ENCODE measurements at regions of chr15 and their contacts with region 1.

Region 1: DNA sequence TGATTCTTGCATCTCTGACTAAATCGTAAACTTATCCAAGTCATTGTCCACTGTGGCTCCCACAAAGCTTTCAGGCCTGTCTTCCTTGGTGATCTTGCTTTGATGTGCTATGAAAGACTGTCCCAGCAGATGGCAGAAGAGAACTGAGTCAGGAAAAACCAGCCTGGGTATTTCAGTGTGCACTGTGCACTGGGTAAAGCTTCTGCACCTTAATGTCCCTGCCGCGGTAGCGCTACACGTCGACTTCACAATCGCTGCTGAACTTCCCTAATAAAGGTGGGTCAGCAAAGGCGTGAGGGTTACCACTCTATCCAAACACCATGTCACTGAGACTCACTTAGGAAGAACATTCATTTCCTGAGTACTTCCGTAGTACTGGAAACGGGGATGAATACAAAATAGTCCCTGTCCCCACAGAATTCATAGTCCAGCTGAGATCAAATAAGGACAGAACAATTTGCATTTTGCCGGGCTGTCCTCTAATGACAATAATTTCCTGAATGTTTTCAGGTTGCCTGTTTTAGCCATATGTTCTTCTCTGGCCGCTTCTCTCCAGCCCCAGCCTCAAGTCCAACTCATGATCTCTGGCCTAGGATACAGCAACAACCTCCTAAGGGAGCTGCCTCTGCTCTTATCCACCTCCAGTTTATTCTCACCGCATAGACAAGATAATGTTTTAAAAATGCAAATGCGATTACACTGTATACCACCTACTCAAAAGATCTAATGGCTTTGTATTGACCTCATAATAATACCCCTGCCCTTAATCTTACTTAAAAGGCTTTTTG is 83.6 kb upstream of the AKAP13 start:
- DNase-seq: peak; percentile 78
- H3K4me3 ChIP-seq: peak overlapping the region in 1 of 4 donors; percentile 28
- H3K27ac ChIP-seq: peak overlapping the region in 1 of 4 donors; percentile 22
- H3K4me1 ChIP-seq: peaks cover 0 to 8% (median 0%) of the 10 kb centered on the region in 4 donors
- H3K27me3 ChIP-seq: no peaks in the 10 kb centered on the region
- CTCF ChIP-seq: peak; percentile 66 to 81 (median 69)
- EP300 ChIP-seq: no peak
- POLR2A ChIP-seq: no peak

Region 2: DNA sequence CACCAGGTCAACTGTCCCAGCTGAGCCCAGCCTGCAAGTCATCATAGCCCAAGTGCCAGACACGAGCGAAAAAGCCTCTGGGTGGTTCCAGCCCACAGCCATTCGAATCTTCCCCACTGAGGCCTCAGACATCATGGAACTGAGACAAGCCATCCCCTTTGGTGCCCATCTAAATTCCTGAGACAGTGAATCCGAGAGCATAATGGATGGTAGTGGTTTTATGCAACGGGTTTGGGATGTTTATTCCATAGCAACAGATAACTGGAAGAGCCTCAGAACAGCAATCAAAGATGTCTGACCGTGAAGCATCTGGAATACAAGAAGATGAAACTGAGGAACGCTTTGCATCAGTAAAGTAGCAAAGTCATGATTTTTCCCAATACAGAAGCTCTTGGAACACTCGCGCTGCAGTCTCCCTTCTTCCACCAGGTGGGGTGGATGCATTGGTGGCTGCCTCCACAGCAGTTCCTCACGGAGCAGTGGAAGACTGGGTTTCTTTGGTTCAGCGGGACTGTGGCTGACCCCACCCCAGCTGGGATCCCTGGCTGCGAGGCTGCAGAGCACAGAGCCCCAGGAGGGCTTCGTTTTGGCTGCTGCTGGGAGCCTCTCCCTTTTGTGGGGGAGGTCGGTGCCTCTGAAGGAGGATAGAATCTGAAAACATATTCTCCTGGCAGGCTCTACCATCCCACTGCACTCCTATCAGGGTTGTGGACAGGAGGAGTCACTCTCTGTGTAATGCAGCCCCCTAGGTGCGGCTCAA is 341.5 kb before region 1 on chr15:
- in situ Hi-C with region 1: loop called in 1 of 4 experiments (anchors 25 kb)
- intact Hi-C with region 1: no loop called
- DNase-seq: peak; percentile 78
- H3K4me3 ChIP-seq: peak overlapping the region in 2 of 4 donors; percentile 5 to 33
- H3K27ac ChIP-seq: no peak overlapping the region
- H3K4me1 ChIP-seq: peaks cover 0 to 7% (median 3%) of the 10 kb centered on the region in 4 donors
- H3K27me3 ChIP-seq: no peaks in the 10 kb centered on the region
- CTCF ChIP-seq: peak; percentile 84 to 93 (median 86)
- EP300 ChIP-seq: no peak
- POLR2A ChIP-seq: no peak

Region 3: DNA sequence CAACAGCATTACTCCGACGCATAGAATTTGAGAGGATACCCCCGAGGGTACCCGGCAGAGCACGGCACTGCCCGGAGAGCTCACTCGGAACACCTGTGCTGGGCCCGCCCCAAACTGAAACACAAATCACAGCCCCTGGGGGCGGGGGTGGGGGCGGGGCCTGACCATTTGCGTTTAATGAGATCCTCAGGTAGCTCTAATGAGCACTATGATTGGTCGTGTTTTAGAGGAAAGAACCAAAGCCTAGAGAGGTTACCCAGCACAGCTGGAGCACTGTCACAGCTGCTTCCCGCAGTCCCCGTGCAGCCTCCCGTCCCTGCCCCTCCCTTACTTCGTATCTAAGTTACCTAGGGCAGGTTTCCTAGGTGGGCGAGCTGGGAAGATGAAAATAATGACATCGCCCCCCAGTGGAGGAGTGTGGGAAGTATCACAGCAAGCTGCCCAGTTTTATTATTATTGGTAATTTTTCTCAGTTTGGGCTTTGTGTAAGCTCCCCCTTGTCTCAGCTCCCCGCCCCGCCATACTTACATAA is 128.1 kb before region 1 on chr15:
- in situ Hi-C with region 1: loop called in 3 of 4 experiments (anchors 25 kb)
- intact Hi-C with region 1: no loop called
- DNase-seq: peak; percentile 57
- H3K4me3 ChIP-seq: peak overlapping the region in 1 of 4 donors; percentile 32
- H3K27ac ChIP-seq: no peak overlapping the region
- H3K4me1 ChIP-seq: peaks cover 0 to 9% (median 2%) of the 10 kb centered on the region in 4 donors
- H3K27me3 ChIP-seq: peaks cover 29% of the 10 kb centered on the region
- CTCF ChIP-seq: peak in 4 of 5 experiments; percentile 34 to 46 (median 39)
- EP300 ChIP-seq: no peak
- POLR2A ChIP-seq: no peak

Region 4: DNA sequence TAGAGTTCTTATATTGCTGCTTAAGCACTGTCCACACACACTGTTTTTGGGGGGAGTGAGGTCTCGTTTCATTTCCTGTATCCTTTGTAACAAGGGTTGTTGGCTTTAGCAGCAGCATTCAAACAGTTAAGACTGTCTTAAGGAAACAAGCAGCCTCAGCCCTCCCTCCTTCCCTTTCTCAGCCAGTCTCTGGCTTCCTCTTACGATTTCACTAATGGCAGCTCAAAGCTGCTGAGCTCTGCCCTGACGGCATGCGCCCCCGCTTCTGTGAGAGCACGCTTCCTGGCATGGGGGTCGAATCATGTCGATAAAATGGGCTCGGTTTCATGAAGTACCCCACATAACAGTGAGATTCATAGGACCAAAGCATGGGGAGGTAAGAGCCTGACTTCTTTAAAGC is 392.9 kb after region 1 on chr15:
- in situ Hi-C with region 1: no loop called
- intact Hi-C with region 1: no loop called
- DNase-seq: peak; percentile 56
- H3K4me3 ChIP-seq: peak overlapping the region in 3 of 4 donors; percentile 7 to 45 (median 26)
- H3K27ac ChIP-seq: peak overlapping the region; percentile 56 to 79 (median 68)
- H3K4me1 ChIP-seq: peaks cover 6 to 31% (median 9%) of the 10 kb centered on the region in 4 donors
- H3K27me3 ChIP-seq: no peaks in the 10 kb centered on the region
- CTCF ChIP-seq: no peak
- EP300 ChIP-seq: no peak
- POLR2A ChIP-seq: peak; percentile 68

Region 5: DNA sequence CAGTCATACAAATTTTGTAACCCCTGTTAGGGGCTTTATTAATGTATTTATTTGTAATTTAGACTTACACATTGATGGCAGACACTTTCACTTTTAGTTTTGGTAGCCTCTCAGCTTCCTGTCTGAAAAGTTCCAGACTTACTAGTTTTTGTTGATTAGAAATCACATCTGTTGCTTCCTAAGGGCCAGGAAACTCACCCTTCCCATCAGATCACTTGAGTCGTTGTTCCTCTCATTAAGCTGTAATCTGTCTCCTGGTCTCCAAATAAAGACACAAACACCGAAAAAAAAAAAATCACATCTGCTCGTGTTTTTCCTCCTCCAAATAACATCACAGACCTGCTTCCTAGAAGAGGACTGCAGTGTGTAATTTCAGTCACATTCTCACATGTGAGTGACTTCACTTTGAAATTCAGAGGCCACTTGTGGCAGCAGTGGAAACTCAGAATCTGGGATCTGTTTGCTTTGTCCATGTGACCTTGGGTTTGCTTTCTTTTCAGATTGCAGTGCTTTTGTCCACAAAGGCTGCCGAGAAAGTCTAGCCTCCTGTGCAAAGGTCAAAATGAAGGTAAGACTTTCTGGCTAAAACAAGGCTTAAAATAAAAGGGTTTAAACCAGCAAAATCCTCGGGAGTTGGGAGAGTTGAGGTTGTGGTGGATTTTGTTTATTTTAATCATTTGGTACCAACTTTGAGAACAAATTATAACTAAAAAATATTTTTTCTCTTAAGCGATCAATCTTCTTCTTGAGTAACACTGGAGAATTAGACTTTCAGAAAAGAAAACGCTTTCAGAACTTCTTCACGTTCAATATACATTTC is 410.9 kb after region 1 on chr15:
- in situ Hi-C with region 1: loop called in 1 of 4 experiments (anchors 25 kb)
- intact Hi-C with region 1: no loop called
- DNase-seq: no peak
- H3K4me3 ChIP-seq: peak overlapping the region in 2 of 4 donors; percentile 0 to 21
- H3K27ac ChIP-seq: peak overlapping the region; percentile 82 to 84 (median 82)
- H3K4me1 ChIP-seq: peaks cover 10 to 60% (median 31%) of the 10 kb centered on the region in 4 donors
- H3K27me3 ChIP-seq: no peaks in the 10 kb centered on the region
- CTCF ChIP-seq: no peak
- EP300 ChIP-seq: no peak
- POLR2A ChIP-seq: no peak

Region 6: GRCh38 chr15:85840065-85840801 is 543.4 kb after region 1 on chr15:
- in situ Hi-C with region 1: loop called (anchors 25 kb)
- intact Hi-C with region 1: no loop called
- DNase-seq: peak; percentile 96
- H3K4me3 ChIP-seq: peak overlapping the region in 2 of 4 donors; percentile 4 to 45
- H3K27ac ChIP-seq: peak overlapping the region; percentile 81 to 92 (median 88)
- H3K4me1 ChIP-seq: peaks cover 5 to 46% (median 27%) of the 10 kb centered on the region in 4 donors
- H3K27me3 ChIP-seq: peaks cover 6% of the 10 kb centered on the region
- CTCF ChIP-seq: peak; percentile 86 to 94 (median 88)
- EP300 ChIP-seq: no peak
- POLR2A ChIP-seq: peak; percentile 78

Measured in transverse colon (tissue), 4 donors.